ENCODE measurements at regions of chr20 and their contacts with region 1.

Region 1: GRCh38 chr20:41693136-41693979 is 75.2 kb upstream of the CHD6 start:
- DNase-seq: peak; percentile 93
- H3K4me3 Mint-ChIP-seq: peak overlapping the region; percentile 91
- H3K27ac Mint-ChIP-seq: peak overlapping the region; percentile 97
- H3K4me1 Mint-ChIP-seq: peaks cover 20% of the 10 kb centered on the region
- H3K27me3 Mint-ChIP-seq: peaks cover 2% of the 10 kb centered on the region

Region 2: DNA sequence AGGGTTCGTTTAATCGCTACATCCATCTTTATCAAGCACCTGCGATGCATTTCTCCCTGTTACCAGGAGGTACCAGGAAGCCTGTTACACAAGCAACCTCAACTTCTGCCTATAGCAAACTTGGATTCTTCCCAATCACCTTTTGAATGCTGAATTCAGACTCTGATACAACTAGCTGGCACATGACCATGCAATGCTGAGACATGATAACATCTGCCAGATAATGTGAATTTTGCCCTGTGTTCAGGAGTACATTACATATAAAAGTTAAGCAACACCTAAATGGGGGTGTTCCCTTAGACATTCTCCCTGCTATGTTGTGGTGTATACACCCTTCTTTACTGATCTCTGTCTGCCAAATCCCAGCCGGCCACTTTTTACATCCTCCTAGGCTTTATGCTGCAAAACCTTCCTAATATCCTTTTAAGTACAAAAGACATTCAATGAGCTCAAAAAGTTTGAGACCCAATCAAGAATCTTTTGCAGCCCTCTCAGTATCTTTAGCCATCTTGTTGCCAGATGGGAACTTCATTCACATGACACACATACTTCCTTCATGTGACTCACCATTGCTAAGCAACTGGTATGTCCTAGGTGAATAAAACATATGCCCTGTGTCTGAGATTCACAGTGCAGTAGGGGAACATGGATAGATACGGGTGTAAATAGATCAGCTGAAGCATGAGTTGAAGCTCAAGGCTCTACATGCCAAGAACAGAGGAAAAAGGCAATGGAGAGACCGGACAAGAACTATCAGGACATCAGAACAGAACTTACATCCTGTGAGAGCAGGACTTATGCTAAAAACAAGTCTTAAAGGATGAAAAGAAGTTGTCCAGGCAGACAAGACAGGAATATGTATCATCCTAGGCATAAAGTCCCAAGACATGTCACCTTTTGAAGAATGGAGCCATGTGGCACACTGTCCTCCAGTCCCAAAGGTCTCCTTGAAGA is 460.1 kb before region 1 on chr20:
- intact Hi-C with region 1: loop called (anchors 10 kb)
- DNase-seq: no peak
- H3K4me3 Mint-ChIP-seq: peak overlapping the region; percentile 28
- H3K27ac Mint-ChIP-seq: peak overlapping the region; percentile 3
- H3K4me1 Mint-ChIP-seq: peaks cover 28% of the 10 kb centered on the region
- H3K27me3 Mint-ChIP-seq: no peaks in the 10 kb centered on the region

Region 3: DNA sequence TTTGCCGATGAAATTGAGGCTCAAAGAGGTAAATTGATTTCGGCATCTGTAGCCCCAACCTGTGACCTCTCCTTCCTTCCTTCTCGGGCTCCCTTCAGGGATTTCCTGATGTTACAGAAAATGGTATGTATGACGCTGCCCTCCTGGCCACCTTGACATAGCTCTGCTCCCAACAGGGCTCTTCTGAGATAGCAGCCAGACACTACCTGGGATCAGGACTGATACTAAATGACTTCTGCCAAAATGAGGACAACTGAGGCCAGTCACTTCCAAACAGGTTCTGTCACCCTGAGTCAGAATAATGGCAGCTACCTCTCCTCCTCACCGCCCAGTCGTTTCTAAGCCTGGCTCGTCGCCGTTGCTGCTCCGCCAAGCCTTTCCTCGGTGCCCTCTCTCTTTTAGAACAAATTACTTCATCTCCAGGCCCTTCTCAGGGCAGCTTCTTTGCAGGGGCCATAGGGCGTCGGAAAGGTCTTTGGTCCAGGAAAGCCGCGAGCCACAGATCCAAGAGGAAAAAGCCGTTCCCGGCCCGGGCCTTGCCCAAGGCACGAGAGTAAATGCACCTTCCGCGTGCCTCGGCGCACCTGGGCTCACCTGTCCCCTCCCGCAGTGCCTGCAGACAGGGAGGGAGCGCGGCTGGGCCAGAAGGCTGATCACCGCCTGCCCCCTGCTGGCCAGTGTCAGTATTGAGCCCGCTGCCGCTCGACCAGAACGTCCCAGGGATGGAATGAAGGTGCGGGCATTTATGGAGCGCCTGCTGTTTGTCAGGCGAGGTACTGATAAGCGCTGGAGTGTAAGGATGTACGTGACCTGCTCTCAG is 353.6 kb before region 1 on chr20:
- intact Hi-C with region 1: loop called (anchors 10 kb)
- DNase-seq: peak; percentile 96
- H3K4me3 Mint-ChIP-seq: peak overlapping the region; percentile 84
- H3K27ac Mint-ChIP-seq: peak overlapping the region; percentile 43
- H3K4me1 Mint-ChIP-seq: peaks cover 10% of the 10 kb centered on the region
- H3K27me3 Mint-ChIP-seq: peaks cover 10% of the 10 kb centered on the region

Region 4: DNA sequence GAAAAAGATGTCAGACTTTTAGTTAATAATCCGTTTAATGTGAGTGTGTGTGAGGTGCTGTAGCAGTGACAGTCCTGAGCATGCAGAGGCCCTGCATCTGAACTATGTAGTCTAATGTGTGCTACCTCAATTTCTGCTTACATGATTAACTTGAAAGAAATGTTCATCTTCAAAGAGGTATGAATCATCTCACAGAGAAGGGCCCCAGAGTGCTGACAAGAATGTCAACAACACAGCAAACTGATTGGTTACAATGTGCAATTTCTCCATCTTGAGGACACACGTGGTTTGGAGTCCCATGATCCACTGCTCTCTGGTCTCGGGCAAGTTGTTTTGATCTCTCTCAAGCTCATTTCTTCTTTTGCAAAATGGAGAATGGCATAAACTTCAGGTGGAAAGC is 265.1 kb before region 1 on chr20:
- intact Hi-C with region 1: loop called (anchors 5 kb)
- DNase-seq: peak; percentile 85
- H3K4me3 Mint-ChIP-seq: peak overlapping the region; percentile 64
- H3K27ac Mint-ChIP-seq: peak overlapping the region; percentile 91
- H3K4me1 Mint-ChIP-seq: peaks cover 46% of the 10 kb centered on the region
- H3K27me3 Mint-ChIP-seq: no peaks in the 10 kb centered on the region

Region 5: GRCh38 chr20:41617931-41618806 is 75.2 kb before region 1 on chr20 and contains the start of gene CHD6:
- intact Hi-C with region 1: loop called (anchors 1 kb)
- DNase-seq: peak; percentile 100
- H3K4me3 Mint-ChIP-seq: peak within 1 kb of the TSS; percentile 89
- H3K27ac Mint-ChIP-seq: peak within 1 kb of the TSS; percentile 86
- H3K4me1 Mint-ChIP-seq: peaks cover 31% of the 10 kb centered on the region
- H3K27me3 Mint-ChIP-seq: peaks cover 26% of the 10 kb centered on the region
- total RNA-seq, gene CHD6: 31.8 and 34.6 TPM in 2 replicates

Region 6: GRCh38 chr20:41643504-41643938 is 49.8 kb before region 1 on chr20:
- intact Hi-C with region 1: no loop called
- DNase-seq: no peak
- H3K4me3 Mint-ChIP-seq: no peak overlapping the region
- H3K27ac Mint-ChIP-seq: no peak overlapping the region
- H3K4me1 Mint-ChIP-seq: no peaks in the 10 kb centered on the region
- H3K27me3 Mint-ChIP-seq: peaks cover 14% of the 10 kb centered on the region